ENCODE measurements at regions of chr1 and their contacts with region 1.

Region 1: DNA sequence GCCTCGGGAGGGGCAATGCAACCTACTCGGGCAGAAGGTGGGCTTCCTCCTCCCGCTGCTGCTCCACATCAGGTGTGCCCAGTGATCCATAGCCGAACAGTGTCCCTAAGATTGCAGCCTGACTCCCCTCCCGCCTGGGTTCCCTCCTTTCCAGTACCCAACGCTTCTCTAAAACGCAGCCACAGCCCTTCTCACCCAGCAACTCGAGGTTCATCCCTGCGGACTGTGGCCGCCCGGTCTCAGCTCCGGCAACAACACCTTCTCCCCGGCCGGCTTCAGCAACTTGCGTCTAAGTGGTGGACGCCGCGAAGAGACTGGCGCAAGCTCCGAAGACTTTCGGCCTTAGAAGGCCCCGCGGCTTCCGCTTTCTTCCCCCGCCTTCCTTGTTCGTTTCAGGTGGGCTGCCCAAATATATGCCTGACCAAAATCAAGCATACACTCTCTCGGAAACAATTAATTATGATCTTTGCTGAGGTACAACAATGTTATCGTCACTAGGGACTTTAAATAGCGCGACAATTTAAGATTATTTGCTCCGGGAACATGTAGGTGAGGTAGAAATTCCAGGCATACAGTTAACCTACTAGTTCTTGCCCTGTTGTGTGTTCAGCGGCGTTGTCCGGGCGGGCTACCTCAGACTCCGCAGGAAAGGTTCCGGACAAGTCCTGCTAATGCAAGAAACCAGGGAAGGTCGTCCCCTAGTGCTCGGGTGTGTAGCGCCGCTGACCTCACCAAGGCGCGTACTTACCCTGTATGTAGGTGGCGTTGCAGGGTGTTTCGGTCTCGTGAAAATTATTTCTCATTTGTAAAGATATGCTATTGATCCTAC is at the start of gene RBBP5:
- DNase-seq: peak; percentile 94 to 98 (median 95)
- H3K4me3 ChIP-seq: peak within 1 kb of the TSS; percentile 76 to 97
- H3K4me3 Mint-ChIP-seq: peak within 1 kb of the TSS; percentile 92 to 99 (median 98)
- H3K27ac ChIP-seq: peak within 1 kb of the TSS; percentile 90
- H3K27ac Mint-ChIP-seq: peak within 1 kb of the TSS; percentile 95 to 100 (median 100)
- H3K4me1 ChIP-seq: peaks cover 41% of the 10 kb centered on the region
- H3K4me1 Mint-ChIP-seq: peaks cover 31 to 59% (median 44%) of the 10 kb centered on the region in 4 donors
- H3K27me3 ChIP-seq: no peaks in the 10 kb centered on the region
- H3K27me3 Mint-ChIP-seq: no peaks in the 10 kb centered on the region
- total RNA-seq, gene RBBP5: 32.4 to 32.9 TPM

Region 2: DNA sequence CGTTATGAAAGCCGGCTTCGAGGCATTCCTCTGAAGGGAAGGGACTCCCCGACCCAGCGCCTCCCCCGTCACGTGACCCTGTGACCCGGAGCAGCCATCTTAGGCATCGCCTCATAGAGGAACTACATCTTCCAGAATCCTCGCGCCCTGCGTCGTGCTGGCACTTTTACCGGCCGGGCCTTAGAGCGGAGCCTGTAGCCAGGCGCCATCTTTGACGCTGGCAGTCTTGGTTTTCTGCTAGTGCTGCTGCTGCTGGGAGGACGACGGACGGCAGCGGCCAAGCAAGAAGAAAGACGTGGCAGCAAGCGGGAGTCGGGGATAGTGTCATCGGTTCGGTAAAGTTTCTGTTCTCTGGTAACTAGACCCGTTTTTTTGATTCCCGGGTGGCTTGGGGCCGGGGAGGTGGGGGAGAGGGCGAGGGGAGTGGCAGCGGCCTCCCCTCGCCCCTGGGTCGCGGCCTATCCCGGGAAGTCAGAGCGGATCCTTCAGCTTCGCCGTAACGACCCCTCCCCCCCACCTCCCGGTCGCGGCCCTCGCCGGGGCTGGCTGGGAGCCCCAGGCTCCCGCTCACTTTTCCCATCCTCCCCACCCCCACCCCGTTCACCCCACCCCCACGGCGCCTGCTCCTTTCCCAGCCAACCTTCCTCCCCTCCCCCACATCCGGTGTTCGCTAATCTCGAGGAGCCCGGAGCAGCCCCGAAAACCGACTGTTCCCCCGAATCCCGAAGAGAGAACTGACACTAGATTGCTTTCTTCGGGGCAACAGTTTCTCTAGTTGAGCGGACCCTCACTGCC is 1326.2 kb before region 1 on chr1 and contains the starts of genes ZBED6 and ZC3H11A:
- CTCF ChIA-PET with region 1: no interaction called
- POLR2A ChIA-PET with region 1: no interaction called
- intact Hi-C with region 1: loop called (anchors 5 kb)
- DNase-seq: peak; percentile 96 to 100 (median 98)
- H3K4me3 ChIP-seq: peak within 1 kb of the TSS; percentile 72 to 74
- H3K4me3 Mint-ChIP-seq: peak within 1 kb of the TSS; percentile 91 to 99 (median 97)
- H3K27ac ChIP-seq: peak within 1 kb of the TSS; percentile 81
- H3K27ac Mint-ChIP-seq: peak within 1 kb of the TSS; percentile 86 to 99 (median 98)
- H3K4me1 ChIP-seq: peaks cover 51% of the 10 kb centered on the region
- H3K4me1 Mint-ChIP-seq: peaks cover 35 to 57% (median 48%) of the 10 kb centered on the region in 4 donors
- H3K27me3 ChIP-seq: no peaks in the 10 kb centered on the region
- H3K27me3 Mint-ChIP-seq: no peaks in the 10 kb centered on the region
- total RNA-seq, gene ZBED6: 26.5 to 29.3 TPM
- total RNA-seq, gene ZC3H11A: 132 to 141 TPM

Region 3: DNA sequence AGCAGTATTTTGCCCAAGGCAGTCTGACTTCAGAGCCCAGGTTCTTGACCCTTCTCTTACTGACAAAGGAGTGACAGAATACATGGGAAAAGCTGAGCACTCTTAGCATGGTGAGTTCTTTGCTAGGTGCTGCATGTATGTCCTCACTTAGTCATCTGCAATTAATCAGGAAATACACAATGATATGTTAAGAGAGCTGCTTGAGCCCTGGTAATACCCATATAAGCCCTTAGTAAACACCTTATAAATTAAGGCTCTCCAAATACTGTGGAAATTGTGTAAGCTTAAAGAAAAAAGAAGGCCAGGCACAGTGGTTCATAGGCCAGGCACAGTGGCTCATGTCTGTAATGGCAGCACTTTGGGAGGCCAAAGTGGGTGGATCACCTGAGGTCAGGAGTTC is 23.6 kb before region 1 on chr1:
- CTCF ChIA-PET with region 1: no interaction called
- POLR2A ChIA-PET with region 1: no interaction called
- intact Hi-C with region 1: no loop called
- DNase-seq: no peak
- H3K4me3 ChIP-seq: no peak overlapping the region
- H3K4me3 Mint-ChIP-seq: no peak overlapping the region
- H3K27ac ChIP-seq: no peak overlapping the region
- H3K27ac Mint-ChIP-seq: no peak overlapping the region
- H3K4me1 ChIP-seq: no peaks in the 10 kb centered on the region
- H3K4me1 Mint-ChIP-seq: peaks cover 0 to 2% (median 0%) of the 10 kb centered on the region in 4 donors
- H3K27me3 ChIP-seq: no peaks in the 10 kb centered on the region
- H3K27me3 Mint-ChIP-seq: no peaks in the 10 kb centered on the region

Region 4: DNA sequence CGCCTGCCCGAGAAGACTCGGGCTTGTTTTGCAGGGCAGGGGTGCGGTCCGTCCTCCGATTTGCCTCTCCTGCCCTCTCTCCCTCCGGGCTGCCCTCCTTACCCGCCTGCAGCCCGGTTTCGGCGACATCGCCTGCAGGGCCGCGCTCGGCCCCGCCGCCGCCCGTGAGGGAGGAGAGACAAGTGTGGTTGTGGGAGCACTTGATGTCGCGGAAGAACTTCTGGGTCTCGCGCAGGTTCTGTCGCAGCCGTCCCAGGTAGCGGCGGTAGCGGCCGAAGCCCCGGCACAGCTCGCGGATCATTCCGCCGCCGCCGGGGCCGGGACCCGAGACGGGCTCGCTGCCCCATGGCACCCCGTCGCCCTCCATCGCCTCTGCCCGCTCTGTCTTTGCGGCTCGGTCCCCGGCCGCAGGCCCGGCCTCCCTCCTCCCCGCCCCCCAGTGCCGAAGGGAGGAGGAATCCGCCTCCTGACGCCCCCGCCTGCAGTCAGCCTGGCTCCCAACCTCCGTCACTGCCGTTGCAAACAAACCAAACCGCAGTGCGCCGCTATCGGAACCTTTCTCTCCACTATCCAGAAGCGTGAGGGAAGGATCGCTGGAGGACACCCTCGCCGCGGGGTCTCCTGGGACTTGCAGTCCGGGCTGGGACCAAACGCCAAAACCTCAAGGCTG is 89.4 kb after region 1 on chr1 and contains the start of gene DSTYK:
- CTCF ChIA-PET with region 1: no interaction called
- POLR2A ChIA-PET with region 1: interaction called, 25 read pairs
- intact Hi-C with region 1: loop called (anchors 1 kb)
- DNase-seq: peak; percentile 91 to 94 (median 93)
- H3K4me3 ChIP-seq: peak within 1 kb of the TSS; percentile 67 to 82
- H3K4me3 Mint-ChIP-seq: peak within 1 kb of the TSS; percentile 89 to 98 (median 96)
- H3K27ac ChIP-seq: peak within 1 kb of the TSS; percentile 80
- H3K27ac Mint-ChIP-seq: peak within 1 kb of the TSS; percentile 96 to 99 (median 97)
- H3K4me1 ChIP-seq: peaks cover 29% of the 10 kb centered on the region
- H3K4me1 Mint-ChIP-seq: peaks cover 22 to 48% (median 34%) of the 10 kb centered on the region in 4 donors
- H3K27me3 ChIP-seq: no peaks in the 10 kb centered on the region
- H3K27me3 Mint-ChIP-seq: peaks cover 0 to 5% of the 10 kb centered on the region in 2 donors
- total RNA-seq, gene DSTYK: 16.4 to 16.6 TPM

Region 5: DNA sequence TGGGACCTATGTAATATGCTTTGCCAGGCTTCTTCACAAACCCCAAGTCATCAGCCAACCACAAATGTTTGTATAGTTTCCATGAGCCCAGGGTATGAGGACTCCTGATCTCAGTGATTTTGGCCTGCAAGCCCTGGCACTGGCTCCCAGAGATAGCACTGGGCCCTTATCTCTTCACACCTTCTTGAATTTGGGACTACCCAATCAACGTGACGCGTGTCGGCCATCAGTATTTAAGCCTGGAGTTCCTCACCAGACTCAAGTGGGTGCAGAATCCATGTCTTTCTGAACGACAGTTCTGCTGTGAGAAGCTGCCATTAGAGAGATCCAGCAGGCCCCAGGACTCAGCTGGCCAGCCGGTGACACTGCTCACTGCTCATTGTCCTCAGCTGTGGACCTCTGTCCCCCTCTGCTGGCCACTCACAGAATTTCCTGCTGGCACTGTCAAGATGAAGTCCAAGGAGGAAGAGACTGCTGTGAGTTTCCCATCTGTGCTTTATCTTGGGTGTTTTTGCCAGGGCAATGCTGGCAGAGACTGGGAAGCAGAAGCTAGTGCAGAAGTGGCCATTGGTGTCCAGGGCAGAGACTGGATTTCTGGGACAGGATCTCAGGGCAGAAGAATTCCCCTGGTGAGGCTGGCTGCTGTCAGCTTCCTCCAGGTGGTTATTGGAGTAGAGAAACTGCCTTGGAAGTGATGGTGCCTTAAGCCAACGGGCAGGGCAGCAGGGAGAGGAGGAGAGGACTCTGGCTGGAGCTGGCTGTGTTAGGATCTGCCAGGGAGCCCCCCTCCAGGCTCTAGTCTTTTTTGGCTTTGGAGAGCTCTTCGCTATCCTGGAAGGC is 134.3 kb after region 1 on chr1:
- CTCF ChIA-PET with region 1: interaction called, 36 read pairs
- POLR2A ChIA-PET with region 1: interaction called, 6 read pairs
- intact Hi-C with region 1: loop called (anchors 1 kb)
- DNase-seq: peak; percentile 76 to 82 (median 80)
- H3K4me3 ChIP-seq: no peak overlapping the region
- H3K4me3 Mint-ChIP-seq: no peak overlapping the region
- H3K27ac ChIP-seq: no peak overlapping the region
- H3K27ac Mint-ChIP-seq: peak overlapping the region in 1 of 7 donors; percentile 46
- H3K4me1 ChIP-seq: no peaks in the 10 kb centered on the region
- H3K4me1 Mint-ChIP-seq: peaks cover 0 to 2% (median 0%) of the 10 kb centered on the region in 4 donors
- H3K27me3 ChIP-seq: no peaks in the 10 kb centered on the region
- H3K27me3 Mint-ChIP-seq: peaks cover 0 to 5% of the 10 kb centered on the region in 2 donors

Region 6: GRCh38 chr1:205775015-205775716 is 653.3 kb after region 1 on chr1 and contains the start of gene RAB29:
- CTCF ChIA-PET with region 1: no interaction called
- POLR2A ChIA-PET with region 1: interaction called, 3 read pairs
- intact Hi-C with region 1: loop called (anchors 1 kb)
- DNase-seq: peak; percentile 88 to 94 (median 90)
- H3K4me3 ChIP-seq: peak within 1 kb of the TSS; percentile 59 to 77
- H3K4me3 Mint-ChIP-seq: peak within 1 kb of the TSS; percentile 91 to 100 (median 92)
- H3K27ac ChIP-seq: peak within 1 kb of the TSS; percentile 87
- H3K27ac Mint-ChIP-seq: peak within 1 kb of the TSS; percentile 92 to 98 (median 97)
- H3K4me1 ChIP-seq: peaks cover 43% of the 10 kb centered on the region
- H3K4me1 Mint-ChIP-seq: peaks cover 35 to 69% (median 48%) of the 10 kb centered on the region in 4 donors
- H3K27me3 ChIP-seq: no peaks in the 10 kb centered on the region
- H3K27me3 Mint-ChIP-seq: no peaks in the 10 kb centered on the region
- total RNA-seq, gene RAB29: 59.7 to 62.0 TPM

Region 7: GRCh38 chr1:206612129-206612876 is 1490.4 kb after region 1 on chr1 and contains the start of gene EIF2D:
- CTCF ChIA-PET with region 1: no interaction called
- POLR2A ChIA-PET with region 1: interaction called, 3 read pairs
- intact Hi-C with region 1: loop called (anchors 2 kb)
- DNase-seq: peak; percentile 90 to 96 (median 92)
- H3K4me3 ChIP-seq: peak within 1 kb of the TSS; percentile 62 to 77
- H3K4me3 Mint-ChIP-seq: peak within 1 kb of the TSS; percentile 91 to 95 (median 93)
- H3K27ac ChIP-seq: peak within 1 kb of the TSS; percentile 80
- H3K27ac Mint-ChIP-seq: peak within 1 kb of the TSS; percentile 87 to 98 (median 96)
- H3K4me1 ChIP-seq: peaks cover 12% of the 10 kb centered on the region
- H3K4me1 Mint-ChIP-seq: peaks cover 12 to 34% (median 21%) of the 10 kb centered on the region in 4 donors
- H3K27me3 ChIP-seq: no peaks in the 10 kb centered on the region
- H3K27me3 Mint-ChIP-seq: no peaks in the 10 kb centered on the region
- total RNA-seq, gene EIF2D: 53.5 to 54.5 TPM

Measured in CD4-positive, alpha-beta memory T cell (primary cell).